CD14-positive monocyte (primary cell): ENCODE measurements at regions of chr2 and their contacts with region 1.

Region 1: DNA sequence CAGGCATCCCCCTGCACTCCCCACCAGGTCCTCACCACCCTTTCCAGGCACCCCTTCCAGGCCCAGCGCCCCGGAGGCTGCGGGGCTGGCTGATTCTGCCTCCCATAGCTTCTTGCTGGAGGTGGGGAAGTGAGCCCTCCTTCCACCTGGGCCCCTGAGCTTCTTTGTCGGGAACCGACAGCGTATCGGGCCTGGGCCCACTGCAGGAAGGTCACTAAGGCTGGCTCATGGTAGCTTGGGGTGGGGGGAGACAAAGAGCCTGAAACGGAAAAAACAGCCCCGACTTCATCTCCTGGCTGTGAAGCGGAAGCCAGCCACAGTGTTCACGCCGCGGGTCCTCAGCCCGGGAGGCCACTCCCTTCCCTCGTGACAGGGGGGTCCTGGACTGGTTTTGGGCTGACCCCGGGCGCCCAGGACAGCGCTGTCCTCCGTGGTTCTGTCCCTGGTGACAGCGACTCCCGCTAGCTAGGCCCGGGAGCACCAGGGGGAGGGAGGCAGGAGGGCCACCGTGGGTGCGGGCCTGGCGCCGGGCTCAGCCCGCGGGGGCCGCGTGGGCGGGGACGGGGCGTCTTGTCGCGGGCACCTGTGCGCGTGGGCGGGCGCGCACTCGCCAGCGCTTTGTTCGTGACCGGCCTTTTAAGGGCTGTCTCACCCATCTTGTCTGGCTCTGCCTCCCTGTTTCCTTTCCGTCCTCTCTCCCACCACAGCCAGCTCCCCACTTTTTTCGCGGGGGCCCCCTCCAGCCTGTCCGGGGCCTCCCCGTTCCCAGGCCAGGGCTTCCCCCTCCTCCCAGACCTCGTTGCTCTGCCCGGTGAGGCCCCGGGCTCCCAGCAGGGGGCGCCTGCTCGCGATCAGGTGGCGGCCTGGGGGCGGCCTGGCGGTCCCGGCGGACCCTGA is 64.9 kb downstream of the DNMT3A start:
- DNase-seq: peak; percentile 59 to 63 (median 63)
- H3K4me3 ChIP-seq: peak overlapping the region; percentile 25 to 74 (median 35)
- H3K4me3 Mint-ChIP-seq: peak overlapping the region; percentile 76 to 85
- H3K27ac ChIP-seq: peak overlapping the region in 1 of 2 donors; percentile 50
- H3K27ac Mint-ChIP-seq: peak overlapping the region in 4 of 7 donors; percentile 30 to 88 (median 69)
- H3K4me1 ChIP-seq: peaks cover 76 to 82% of the 10 kb centered on the region in 2 donors
- H3K4me1 Mint-ChIP-seq: peaks cover 70% of the 10 kb centered on the region
- H3K27me3 ChIP-seq: no peaks in the 10 kb centered on the region
- H3K27me3 Mint-ChIP-seq: peaks cover 3 to 11% (median 11%) of the 10 kb centered on the region in 3 donors
- CTCF ChIP-seq: peak; percentile 99

Region 2: DNA sequence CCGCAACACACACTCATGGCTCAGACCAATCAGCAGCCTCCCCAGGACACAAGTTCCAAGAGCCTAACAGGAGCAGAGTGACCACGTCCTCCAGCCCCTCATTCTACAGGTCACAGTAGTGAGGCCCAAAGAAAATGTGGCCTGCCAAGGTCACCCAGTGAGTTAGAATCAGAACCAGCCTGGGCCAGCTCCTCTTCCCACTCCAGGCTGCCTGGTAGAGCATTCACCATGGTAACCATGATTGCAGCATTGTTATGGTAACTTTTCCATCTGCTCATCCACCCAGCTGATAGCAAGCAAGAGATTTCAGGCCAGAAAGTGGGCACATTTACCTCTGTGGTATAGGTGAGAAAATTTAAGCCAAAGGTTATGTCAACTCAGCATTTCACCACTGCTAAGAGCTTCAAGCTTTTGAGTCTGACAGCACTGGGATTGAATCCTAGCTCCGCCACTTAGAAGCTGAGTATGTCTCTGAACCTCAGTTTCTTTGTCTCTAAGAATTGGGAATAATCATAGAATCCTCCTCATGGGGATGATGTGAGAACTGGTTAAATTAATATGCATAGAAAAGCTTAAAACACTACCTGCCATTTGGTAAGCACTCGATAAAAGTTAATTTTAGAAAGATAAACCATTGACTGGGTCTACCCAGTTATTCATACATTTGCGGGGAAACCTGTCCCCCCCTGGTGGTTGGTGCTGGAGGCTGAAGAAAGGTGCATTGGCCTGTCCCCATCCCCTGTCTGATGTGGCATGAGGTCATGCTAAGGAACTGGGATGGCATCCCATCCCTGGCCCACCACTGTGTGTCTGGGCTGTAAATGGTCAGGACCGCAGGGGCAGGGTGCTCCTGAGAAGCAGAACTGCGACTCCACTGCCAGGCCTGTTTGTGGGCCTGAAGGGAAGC is 1710.3 kb before region 1 on chr2:
- intact Hi-C with region 1: no loop called
- DNase-seq: no peak
- H3K4me3 ChIP-seq: no peak overlapping the region
- H3K4me3 Mint-ChIP-seq: no peak overlapping the region
- H3K27ac ChIP-seq: no peak overlapping the region
- H3K27ac Mint-ChIP-seq: no peak overlapping the region
- H3K4me1 ChIP-seq: no peaks in the 10 kb centered on the region
- H3K4me1 Mint-ChIP-seq: no peaks in the 10 kb centered on the region
- H3K27me3 ChIP-seq: no peaks in the 10 kb centered on the region
- H3K27me3 Mint-ChIP-seq: peaks cover 3 to 11% (median 3%) of the 10 kb centered on the region in 3 donors
- CTCF ChIP-seq: peak; percentile 8

Region 3: DNA sequence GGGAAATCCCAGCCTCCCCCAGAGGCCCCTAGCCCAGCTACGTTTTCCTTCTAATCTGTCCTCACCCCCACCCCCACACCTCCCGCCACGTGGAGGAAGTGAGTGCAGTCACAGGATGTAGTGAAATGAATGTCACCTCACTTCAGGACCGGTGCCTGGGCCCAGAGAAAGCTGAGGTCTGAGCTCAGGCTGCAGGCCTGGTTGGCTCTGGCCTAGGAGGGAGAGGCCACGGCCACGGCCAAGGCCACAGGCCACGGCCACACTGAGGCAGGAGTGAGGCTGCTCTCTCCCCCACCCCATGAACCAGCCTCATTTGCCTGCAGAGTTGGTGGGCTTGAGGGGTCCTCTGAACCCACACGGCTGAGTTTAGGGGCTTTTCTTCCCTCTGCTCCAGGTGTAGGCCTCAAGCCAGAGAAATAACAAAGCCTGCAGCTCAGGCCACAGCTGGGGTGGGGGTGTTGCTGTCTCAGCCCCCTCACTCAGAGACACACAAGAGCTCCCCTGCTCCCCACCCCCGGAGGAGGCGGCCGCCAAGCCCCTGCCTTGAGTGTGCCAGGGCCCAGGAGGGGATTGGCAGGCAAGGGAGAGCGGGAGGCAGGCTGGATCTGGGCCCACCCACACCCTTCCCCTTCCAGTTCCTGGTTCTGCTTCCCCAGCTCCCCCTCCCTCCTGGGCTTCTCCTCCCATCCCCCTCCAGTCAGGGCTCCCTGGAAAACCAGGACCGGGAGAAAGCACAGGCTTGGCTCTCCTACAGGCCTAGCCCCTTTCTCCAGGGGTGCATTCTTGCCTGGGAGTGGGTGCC is 37.9 kb after region 1 on chr2:
- intact Hi-C with region 1: loop called (anchors 5 kb)
- DNase-seq: peak in 2 of 3 donors; percentile 18 to 30
- H3K4me3 ChIP-seq: peak overlapping the region in 1 of 3 experiments; percentile 51
- H3K4me3 Mint-ChIP-seq: peak overlapping the region in 1 of 2 donors; percentile 67
- H3K27ac ChIP-seq: peak overlapping the region; percentile 27 to 69
- H3K27ac Mint-ChIP-seq: peak overlapping the region in 6 of 7 donors; percentile 40 to 91 (median 79)
- H3K4me1 ChIP-seq: peaks cover 37 to 42% of the 10 kb centered on the region in 2 donors
- H3K4me1 Mint-ChIP-seq: peaks cover 44% of the 10 kb centered on the region
- H3K27me3 ChIP-seq: no peaks in the 10 kb centered on the region
- H3K27me3 Mint-ChIP-seq: peaks cover 0 to 8% (median 0%) of the 10 kb centered on the region in 3 donors
- CTCF ChIP-seq: no peak

Region 4: GRCh38 chr2:25342372-25343186 is 65.8 kb after region 1 on chr2:
- intact Hi-C with region 1: loop called (anchors 5 to 10 kb)
- DNase-seq: peak; percentile 70 to 73 (median 72)
- H3K4me3 ChIP-seq: peak overlapping the region; percentile 18 to 78 (median 52)
- H3K4me3 Mint-ChIP-seq: peak overlapping the region; percentile 76 to 80
- H3K27ac ChIP-seq: no peak overlapping the region
- H3K27ac Mint-ChIP-seq: peak overlapping the region in 1 of 7 donors; percentile 37
- H3K4me1 ChIP-seq: peaks cover 7 to 27% of the 10 kb centered on the region in 2 donors
- H3K4me1 Mint-ChIP-seq: peaks cover 24% of the 10 kb centered on the region
- H3K27me3 ChIP-seq: peaks cover 0 to 7% of the 10 kb centered on the region in 2 donors
- H3K27me3 Mint-ChIP-seq: peaks cover 9 to 22% (median 14%) of the 10 kb centered on the region in 3 donors
- CTCF ChIP-seq: peak; percentile 99

Region 5: GRCh38 chr2:25558262-25558661 is 281.4 kb after region 1 on chr2:
- intact Hi-C with region 1: loop called in 1 of 2 experiments (anchors 10 kb)
- DNase-seq: peak; percentile 82 to 91 (median 87)
- H3K4me3 ChIP-seq: peak overlapping the region in 1 of 3 experiments; percentile 53
- H3K4me3 Mint-ChIP-seq: peak overlapping the region; percentile 46 to 85
- H3K27ac ChIP-seq: peak overlapping the region; percentile 59 to 80
- H3K27ac Mint-ChIP-seq: peak overlapping the region; percentile 92 to 100 (median 95)
- H3K4me1 ChIP-seq: peaks cover 39 to 49% of the 10 kb centered on the region in 2 donors
- H3K4me1 Mint-ChIP-seq: peaks cover 44% of the 10 kb centered on the region
- H3K27me3 ChIP-seq: no peaks in the 10 kb centered on the region
- H3K27me3 Mint-ChIP-seq: peaks cover 0 to 2% (median 0%) of the 10 kb centered on the region in 3 donors
- CTCF ChIP-seq: peak; percentile 20